ENCODE measurements at regions of chr1 and their contacts with region 1.

Region 1: GRCh38 chr1:203702130-203702577 is 62.8 kb upstream of the LAX1 start:
- DNase-seq: peak in 2 of 3 donors; percentile 47 to 79
- ATAC-seq: peak; percentile 69
- H3K4me3 ChIP-seq: no peak overlapping the region
- H3K4me1 ChIP-seq: no peaks in the 10 kb centered on the region
- CTCF ChIP-seq: peak; percentile 27

Region 2: GRCh38 chr1:203504397-203505250 is 197.5 kb before region 1 on chr1:
- intact Hi-C with region 1: loop called (anchors 5 kb)
- DNase-seq: peak in 2 of 3 donors; percentile 73 to 93
- ATAC-seq: peak; percentile 90
- H3K4me3 ChIP-seq: no peak overlapping the region
- H3K4me1 ChIP-seq: no peaks in the 10 kb centered on the region
- CTCF ChIP-seq: peak; percentile 62